ENCODE measurements at regions of chr6 and their contacts with region 1.

Region 1: GRCh38 chr6:24933868-24934401 is 1.8 kb downstream of the RIPOR2 start:
- DNase-seq: peak in 1 of 2 experiments; percentile 70
- H3K4me3 ChIP-seq: peak overlapping the region in 1 of 4 experiments; percentile 53; a peak in 2 of 8 replicates
- H3K27ac ChIP-seq: no peak overlapping the region
- H3K4me1 ChIP-seq: peaks cover 4 to 25% (median 19%) of the 10 kb centered on the region in 4 experiments; a peak in 6 of 7 replicates
- H3K27me3 ChIP-seq: no peaks in the 10 kb centered on the region; a peak in 1 of 7 replicates
- CTCF ChIP-seq: peak; percentile 57 to 91 (median 68)
- EP300 ChIP-seq: no peak
- POLR2A ChIP-seq: no peak
- RAD21 ChIP-seq: peak; percentile 49 to 69

Region 2: GRCh38 chr6:24876499-24877465 is 57.2 kb before region 1 on chr6:
- CTCF ChIA-PET with region 1: interaction called, 35 read pairs
- POLR2A ChIA-PET with region 1: no interaction called
- DNase-seq: peak in 1 of 2 experiments; percentile 66
- H3K4me3 ChIP-seq: peak overlapping the region in 3 of 4 experiments; percentile 15 to 48 (median 21); a peak in 5 of 8 replicates
- H3K27ac ChIP-seq: peak overlapping the region; percentile 78
- H3K4me1 ChIP-seq: peaks cover 0 to 31% (median 16%) of the 10 kb centered on the region in 4 experiments; a peak in 6 of 7 replicates
- H3K27me3 ChIP-seq: no peaks in the 10 kb centered on the region
- CTCF ChIP-seq: no peak
- EP300 ChIP-seq: 0 out of 3 replicates have a peak, but pooled peaks of 1 of the 2 experiments have one; percentile 51
- POLR2A ChIP-seq: peak; percentile 66 to 83
- RAD21 ChIP-seq: peak in 1 of 2 experiments; percentile 34; a peak in 3 of 4 replicates

Region 3: DNA sequence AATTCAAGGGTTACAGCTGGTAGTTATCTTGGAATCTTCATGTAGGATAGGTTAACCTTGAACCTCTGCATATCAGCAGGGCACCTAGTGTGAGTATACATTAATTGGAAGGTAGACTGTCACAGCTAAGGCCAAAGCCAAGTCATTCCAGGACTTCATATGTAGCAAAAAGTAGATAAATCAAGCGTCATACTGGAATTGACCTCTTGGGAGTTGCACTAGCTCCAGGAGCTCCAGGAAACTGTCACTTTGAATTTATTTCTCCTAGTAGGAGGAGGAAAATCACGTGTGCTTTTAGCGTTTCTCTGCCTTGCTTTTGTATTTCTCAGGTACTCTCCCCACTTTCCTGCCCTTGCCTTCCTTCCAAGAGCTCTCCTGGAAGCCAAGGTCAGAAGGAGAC is 28.5 kb before region 1 on chr6:
- CTCF ChIA-PET with region 1: interaction called, 103 read pairs
- POLR2A ChIA-PET with region 1: interaction called, 3 read pairs
- DNase-seq: no peak
- H3K4me3 ChIP-seq: no peak overlapping the region
- H3K27ac ChIP-seq: no peak overlapping the region
- H3K4me1 ChIP-seq: peaks cover 2 to 14% (median 9%) of the 10 kb centered on the region in 4 experiments; a peak in 6 of 7 replicates
- H3K27me3 ChIP-seq: peaks cover 0 to 12% (median 10%) of the 10 kb centered on the region in 4 experiments; a peak in 5 of 7 replicates
- CTCF ChIP-seq: no peak
- EP300 ChIP-seq: no peak
- POLR2A ChIP-seq: no peak
- RAD21 ChIP-seq: no peak

Region 4: GRCh38 chr6:24951811-24952299 is 17.9 kb after region 1 on chr6:
- CTCF ChIA-PET with region 1: interaction called, 18 read pairs
- POLR2A ChIA-PET with region 1: interaction called, 3 read pairs
- DNase-seq: no peak
- H3K4me3 ChIP-seq: no peak overlapping the region
- H3K27ac ChIP-seq: no peak overlapping the region
- H3K4me1 ChIP-seq: no peaks in the 10 kb centered on the region
- H3K27me3 ChIP-seq: no peaks in the 10 kb centered on the region
- CTCF ChIP-seq: no peak
- EP300 ChIP-seq: no peak
- POLR2A ChIP-seq: no peak
- RAD21 ChIP-seq: no peak

Region 5: DNA sequence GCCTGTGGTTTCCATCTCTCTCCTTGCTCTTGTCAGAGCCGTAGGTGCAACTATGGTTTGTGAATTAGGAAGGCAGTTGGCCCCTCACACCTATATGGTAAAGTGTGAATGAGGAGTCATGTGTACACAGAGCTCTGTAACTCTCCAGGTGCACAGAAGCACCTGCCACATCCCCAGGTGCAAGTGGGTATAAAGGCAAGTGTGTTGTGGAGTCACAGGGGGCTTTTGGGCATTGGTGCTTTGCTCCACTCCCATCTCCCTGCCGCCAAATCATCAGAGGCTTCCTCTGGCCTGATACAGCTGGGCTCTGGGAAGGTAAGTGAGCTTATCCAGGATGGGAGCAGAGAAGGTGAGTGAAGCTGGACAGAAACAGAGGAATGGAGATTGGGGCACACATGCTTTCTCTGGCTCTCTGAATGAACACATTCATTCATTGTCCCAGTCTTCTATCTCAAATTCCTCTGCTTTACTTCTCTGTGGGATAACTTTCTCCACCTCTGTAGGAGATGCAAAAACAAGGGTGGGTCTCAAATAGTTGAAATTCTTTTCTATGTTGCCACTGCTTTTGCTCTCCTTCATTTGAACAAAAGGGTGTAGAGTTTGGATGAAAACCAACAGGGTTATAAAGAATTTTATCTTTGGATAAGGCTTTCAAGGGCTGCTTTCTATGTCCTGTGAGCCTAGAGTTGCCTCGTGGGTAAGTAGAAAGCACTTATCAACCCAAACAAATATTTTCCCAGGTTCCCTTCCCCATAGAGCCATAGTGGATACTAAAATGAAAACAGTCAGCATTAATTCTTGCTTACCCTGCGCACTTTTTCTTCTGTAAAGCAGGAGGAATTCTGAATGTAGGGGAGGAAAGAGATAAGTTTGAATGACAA is 46.8 kb after region 1 on chr6:
- CTCF ChIA-PET with region 1: interaction called, 87 read pairs
- POLR2A ChIA-PET with region 1: interaction called, 7 read pairs
- DNase-seq: peak in 1 of 2 experiments; percentile 65
- H3K4me3 ChIP-seq: peak overlapping the region in 3 of 4 experiments; percentile 6 to 46 (median 13); a peak in 4 of 8 replicates
- H3K27ac ChIP-seq: peak overlapping the region; percentile 96
- H3K4me1 ChIP-seq: peaks cover 17 to 42% (median 31%) of the 10 kb centered on the region in 4 experiments; a peak in 6 of 7 replicates
- H3K27me3 ChIP-seq: no peaks in the 10 kb centered on the region
- CTCF ChIP-seq: no peak
- EP300 ChIP-seq: peak in 1 of 2 experiments; percentile 76; a peak in 1 of 3 replicates
- POLR2A ChIP-seq: peak; percentile 45 to 86
- RAD21 ChIP-seq: no peak; a peak in 1 of 4 replicates

Region 6: GRCh38 chr6:25027221-25027916 is 93.4 kb after region 1 on chr6:
- CTCF ChIA-PET with region 1: interaction called, 12 read pairs
- POLR2A ChIA-PET with region 1: no interaction called
- DNase-seq: no peak
- H3K4me3 ChIP-seq: no peak overlapping the region
- H3K27ac ChIP-seq: no peak overlapping the region
- H3K4me1 ChIP-seq: peaks cover 0 to 9% (median 0%) of the 10 kb centered on the region in 4 experiments; a peak in 3 of 7 replicates
- H3K27me3 ChIP-seq: no peaks in the 10 kb centered on the region
- CTCF ChIP-seq: peak; percentile 31 to 40 (median 33); a peak in 3 of 4 replicates
- EP300 ChIP-seq: no peak
- POLR2A ChIP-seq: no peak
- RAD21 ChIP-seq: peak; percentile 29 to 42; a peak in 3 of 4 replicates

Measured in H1 (cell line).